ENCODE measurements at regions of chr4 and their contacts with region 1.

Region 1: GRCh38 chr4:89316931-89317366 is 9.3 kb upstream of the GPRIN3 start:
- DNase-seq: peak in 5 of 9 experiments; percentile 33 to 70 (median 54)
- ATAC-seq: peak; percentile 87
- H3K4me3 ChIP-seq: no peak overlapping the region
- H3K4me3 Mint-ChIP-seq: peak overlapping the region; percentile 20
- H3K27ac ChIP-seq: peak overlapping the region; percentile 13 to 67
- H3K27ac Mint-ChIP-seq: peak overlapping the region; percentile 86
- H3K4me1 ChIP-seq: peaks cover 18% of the 10 kb centered on the region
- H3K4me1 Mint-ChIP-seq: peaks cover 20% of the 10 kb centered on the region
- H3K27me3 ChIP-seq: no peaks in the 10 kb centered on the region
- H3K27me3 Mint-ChIP-seq: no peaks in the 10 kb centered on the region
- CTCF ChIP-seq: no peak

Region 2: GRCh38 chr4:89300499-89300898 is 16.4 kb before region 1 on chr4:
- CTCF ChIA-PET with region 1: no interaction called
- POLR2A ChIA-PET with region 1: interaction called, 6 read pairs
- intact Hi-C with region 1: loop called in 1 of 2 experiments (anchors 2 kb)
- DNase-seq: no peak
- ATAC-seq: no peak
- H3K4me3 ChIP-seq: no peak overlapping the region
- H3K4me3 Mint-ChIP-seq: peak overlapping the region; percentile 59
- H3K27ac ChIP-seq: peak overlapping the region in 1 of 2 experiments; percentile 83
- H3K27ac Mint-ChIP-seq: peak overlapping the region; percentile 89
- H3K4me1 ChIP-seq: peaks cover 78% of the 10 kb centered on the region
- H3K4me1 Mint-ChIP-seq: peaks cover 82% of the 10 kb centered on the region
- H3K27me3 ChIP-seq: no peaks in the 10 kb centered on the region
- H3K27me3 Mint-ChIP-seq: no peaks in the 10 kb centered on the region
- CTCF ChIP-seq: no peak

Measured in CD8-positive, alpha-beta T cell (primary cell).